ENCODE measurements at regions of chr20 and their contacts with region 1.

Region 1: GRCh38 chr20:31496761-31497295 is 17.4 kb upstream of the HM13 start:
- DNase-seq: no peak
- ATAC-seq: no peak
- H3K4me3 ChIP-seq: no peak overlapping the region
- H3K27ac ChIP-seq: no peak overlapping the region
- H3K4me1 ChIP-seq: no peaks in the 10 kb centered on the region
- H3K27me3 ChIP-seq: no peaks in the 10 kb centered on the region
- CTCF ChIP-seq: no peak
- EP300 ChIP-seq: no peak
- POLR2A ChIP-seq: no peak
- RAD21 ChIP-seq: no peak

Region 2: DNA sequence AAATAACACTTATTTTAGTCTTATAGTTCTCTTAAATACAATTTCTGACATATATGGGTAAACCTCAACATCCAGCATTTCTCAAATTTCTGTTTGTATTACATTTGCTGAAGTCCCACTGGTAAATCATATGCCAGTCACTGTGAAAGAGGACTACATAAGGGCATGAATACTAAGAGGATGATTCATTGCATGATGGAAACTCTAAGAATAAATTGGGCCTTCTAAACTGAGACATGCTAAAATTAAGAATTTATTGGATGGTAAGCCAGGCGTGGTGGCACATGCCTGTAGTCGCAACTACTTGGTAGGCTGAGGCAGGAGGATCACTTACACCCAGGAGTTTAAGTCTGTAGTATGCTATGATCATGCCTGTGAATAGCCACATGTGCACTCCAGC is 44.3 kb before region 1 on chr20:
- CTCF ChIA-PET with region 1: interaction called, 137 read pairs
- POLR2A ChIA-PET with region 1: no interaction called
- RAD21 ChIA-PET with region 1: interaction called, 3 read pairs
- SMC1A ChIA-PET with region 1: interaction called, 46 read pairs
- in situ Hi-C with region 1: no loop called
- intact Hi-C with region 1: no loop called
- DNase-seq: no peak
- ATAC-seq: no peak
- H3K4me3 ChIP-seq: no peak overlapping the region
- H3K27ac ChIP-seq: no peak overlapping the region
- H3K4me1 ChIP-seq: no peaks in the 10 kb centered on the region
- H3K27me3 ChIP-seq: no peaks in the 10 kb centered on the region
- CTCF ChIP-seq: no peak
- EP300 ChIP-seq: no peak
- POLR2A ChIP-seq: no peak
- RAD21 ChIP-seq: no peak

Region 3: GRCh38 chr20:31485450-31486339 is 11.1 kb before region 1 on chr20:
- CTCF ChIA-PET with region 1: interaction called, 27 read pairs
- POLR2A ChIA-PET with region 1: no interaction called
- RAD21 ChIA-PET with region 1: no interaction called
- SMC1A ChIA-PET with region 1: no interaction called
- in situ Hi-C with region 1: no loop called
- intact Hi-C with region 1: no loop called
- DNase-seq: no peak
- ATAC-seq: no peak
- H3K4me3 ChIP-seq: no peak overlapping the region
- H3K27ac ChIP-seq: no peak overlapping the region
- H3K4me1 ChIP-seq: no peaks in the 10 kb centered on the region
- H3K27me3 ChIP-seq: peaks cover 1 to 2% of the 10 kb centered on the region in 2 experiments; a peak in 3 of 4 replicates
- CTCF ChIP-seq: no peak
- EP300 ChIP-seq: no peak
- POLR2A ChIP-seq: no peak
- RAD21 ChIP-seq: no peak

Region 4: GRCh38 chr20:31514159-31515071 is 17.6 kb after region 1 on chr20 and contains the start of gene HM13:
- CTCF ChIA-PET with region 1: interaction called, 25 read pairs
- POLR2A ChIA-PET with region 1: no interaction called
- RAD21 ChIA-PET with region 1: no interaction called
- SMC1A ChIA-PET with region 1: no interaction called
- in situ Hi-C with region 1: no loop called
- intact Hi-C with region 1: no loop called
- DNase-seq: peak; percentile 63
- ATAC-seq: peak; percentile 83
- H3K4me3 ChIP-seq: peak within 1 kb of the TSS; percentile 90
- H3K27ac ChIP-seq: peak within 1 kb of the TSS; percentile 85
- H3K4me1 ChIP-seq: peaks cover 10% of the 10 kb centered on the region
- H3K27me3 ChIP-seq: no peaks in the 10 kb centered on the region
- CTCF ChIP-seq: peak; percentile 90 to 99 (median 99); a peak in 5 of 6 replicates
- EP300 ChIP-seq: no peak
- POLR2A ChIP-seq: peak; percentile 100
- RAD21 ChIP-seq: no peak
- polyA plus RNA-seq, gene HM13: 4.8 to 17.5 TPM